Heart right ventricle (tissue), 16 donors: ENCODE measurements at regions of chr9 and their contacts with region 1.

Region 1: GRCh38 chr9:33287087-33287490 is 3.2 kb upstream of the NFX1 start:
- DNase-seq: peak in 1 of 2 donors; percentile 34
- ATAC-seq: no peak
- H3K4me3 ChIP-seq: no peak overlapping the region
- H3K27ac ChIP-seq: peak overlapping the region in 7 of 10 donors; percentile 3 to 35 (median 24)
- H3K4me1 ChIP-seq: peaks cover 0 to 31% (median 26%) of the 10 kb centered on the region in 9 donors
- H3K27me3 ChIP-seq: no peaks in the 10 kb centered on the region
- CTCF ChIP-seq: peak; percentile 31 to 76 (median 67)

Region 2: GRCh38 chr9:33233681-33234473 is 53.2 kb before region 1 on chr9:
- intact Hi-C with region 1: no loop called
- DNase-seq: no peak
- ATAC-seq: no peak
- H3K4me3 ChIP-seq: no peak overlapping the region
- H3K27ac ChIP-seq: no peak overlapping the region
- H3K4me1 ChIP-seq: no peaks in the 10 kb centered on the region
- H3K27me3 ChIP-seq: no peaks in the 10 kb centered on the region
- CTCF ChIP-seq: no peak

Region 3: DNA sequence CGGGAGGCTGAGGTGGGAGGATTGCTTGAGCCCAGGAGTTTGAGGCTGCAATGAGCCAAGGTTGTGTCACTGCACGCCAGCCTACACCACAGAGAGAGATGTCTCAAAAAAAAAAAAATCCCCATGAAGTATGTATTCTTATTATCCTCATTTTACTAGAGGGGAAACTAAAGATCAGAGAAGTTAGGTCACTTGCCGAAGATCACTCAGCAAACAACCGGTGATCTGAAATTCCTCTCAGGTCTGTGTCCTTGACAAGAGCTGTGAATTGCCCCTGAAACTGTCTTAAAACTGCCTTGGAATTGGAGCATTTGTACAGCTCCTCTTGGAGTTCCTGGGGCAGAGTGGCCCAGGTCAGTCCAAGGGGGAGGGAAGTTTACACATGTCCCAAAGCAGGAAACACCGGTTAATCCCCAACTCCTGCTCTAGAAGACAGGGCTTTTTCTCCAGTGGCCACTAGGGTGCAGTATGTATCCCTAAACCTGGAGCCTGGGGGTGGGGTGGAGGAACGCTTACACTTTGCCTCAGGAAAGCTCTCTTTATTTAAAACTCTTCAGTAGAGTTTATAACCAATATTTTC is 87.6 kb after region 1 on chr9:
- intact Hi-C with region 1: no loop called
- DNase-seq: peak in 1 of 2 donors; percentile 87
- ATAC-seq: peak; percentile 63 to 92 (median 82)
- H3K4me3 ChIP-seq: peak overlapping the region in 6 of 10 donors; percentile 6 to 30 (median 22)
- H3K27ac ChIP-seq: peak overlapping the region in 6 of 10 donors; percentile 2 to 79 (median 54)
- H3K4me1 ChIP-seq: peaks cover 5 to 29% (median 18%) of the 10 kb centered on the region in 9 donors
- H3K27me3 ChIP-seq: no peaks in the 10 kb centered on the region
- CTCF ChIP-seq: peak; percentile 72 to 94 (median 88)

Region 4: DNA sequence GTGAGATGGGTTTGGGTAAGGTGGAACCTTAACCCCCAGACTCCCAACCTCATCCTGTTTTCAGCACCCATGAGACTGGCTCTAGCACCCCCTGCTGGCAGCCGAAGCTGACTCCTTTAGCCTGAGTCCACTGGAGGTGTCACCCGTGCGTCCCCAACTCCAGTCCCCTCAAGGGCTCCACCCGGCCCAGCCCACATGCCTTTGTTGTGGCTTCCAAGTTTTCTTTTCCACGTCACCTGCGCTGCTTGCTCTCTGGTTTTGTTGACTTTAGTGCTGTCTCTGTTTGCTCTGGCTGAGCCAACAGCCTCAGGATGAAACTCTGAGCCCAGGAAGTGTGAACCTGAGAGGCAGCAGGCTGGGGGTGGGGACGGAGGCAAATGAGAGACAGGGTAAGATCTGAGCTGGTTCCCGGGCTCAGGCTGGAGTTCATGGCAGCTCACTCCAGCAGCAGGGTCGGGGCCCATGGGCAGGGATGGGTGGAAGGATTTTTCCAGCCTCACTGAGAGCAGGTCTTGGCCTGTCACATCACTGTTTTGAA is 128.5 kb after region 1 on chr9:
- intact Hi-C with region 1: loop called in 1 of 10 experiments (anchors 5 kb)
- DNase-seq: peak; percentile 71 to 81
- ATAC-seq: peak; percentile 77 to 89 (median 84)
- H3K4me3 ChIP-seq: no peak overlapping the region
- H3K27ac ChIP-seq: no peak overlapping the region
- H3K4me1 ChIP-seq: peaks cover 4 to 14% (median 8%) of the 10 kb centered on the region in 9 donors
- H3K27me3 ChIP-seq: no peaks in the 10 kb centered on the region
- CTCF ChIP-seq: peak; percentile 42 to 86 (median 79)

Region 5: DNA sequence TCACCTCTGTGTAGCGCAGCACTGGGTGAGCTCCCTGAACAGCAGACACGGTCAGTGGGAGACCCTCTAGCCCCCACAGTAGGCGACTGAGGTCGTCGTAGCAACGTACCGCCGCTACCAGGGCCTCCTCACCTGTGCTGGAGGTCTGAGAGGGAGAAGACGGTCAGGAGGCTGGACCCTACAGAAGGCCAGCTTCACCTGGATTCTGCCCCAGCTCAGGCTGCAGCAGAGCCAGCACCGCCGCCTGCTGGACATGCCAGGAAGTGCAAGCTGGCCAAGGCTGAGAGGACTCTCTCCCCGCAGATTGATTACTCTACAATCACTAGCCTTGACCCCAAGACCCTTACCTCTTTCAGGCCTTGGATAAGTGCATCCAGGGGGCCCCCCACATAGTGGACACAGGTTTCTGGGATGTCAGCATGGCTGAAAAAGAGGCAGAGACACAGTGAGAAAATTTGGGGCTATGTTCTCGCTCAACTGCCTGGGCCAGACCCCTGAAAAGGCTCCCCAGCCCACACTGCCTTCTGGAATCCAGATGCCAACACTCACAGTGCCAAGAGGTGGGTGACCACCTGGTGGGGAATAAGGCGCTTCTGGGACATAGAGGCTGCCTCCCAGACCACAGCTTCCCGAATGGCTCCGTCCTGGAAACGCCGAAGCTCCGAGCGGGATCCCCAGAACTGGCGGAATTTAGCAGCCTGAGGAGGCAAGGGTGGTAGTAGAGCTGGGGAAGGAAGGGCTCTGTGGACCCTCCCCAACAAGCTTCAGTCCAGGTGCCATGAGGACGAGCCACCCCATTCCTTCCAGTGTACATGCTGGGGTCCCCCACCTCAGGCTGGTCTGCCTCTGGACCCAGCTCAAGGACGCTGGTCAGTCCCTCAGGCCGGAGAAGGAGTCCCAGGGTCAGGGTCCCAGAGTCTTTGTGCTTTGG is 179.7 kb after region 1 on chr9:
- intact Hi-C with region 1: loop called in 6 of 10 experiments (anchors 5 to 10 kb)
- DNase-seq: peak; percentile 45 to 71
- ATAC-seq: peak; percentile 25 to 81 (median 50)
- H3K4me3 ChIP-seq: no peak overlapping the region
- H3K27ac ChIP-seq: no peak overlapping the region
- H3K4me1 ChIP-seq: peaks cover 0 to 2% (median 0%) of the 10 kb centered on the region in 9 donors
- H3K27me3 ChIP-seq: no peaks in the 10 kb centered on the region
- CTCF ChIP-seq: peak; percentile 85 to 96 (median 93)

Region 6: DNA sequence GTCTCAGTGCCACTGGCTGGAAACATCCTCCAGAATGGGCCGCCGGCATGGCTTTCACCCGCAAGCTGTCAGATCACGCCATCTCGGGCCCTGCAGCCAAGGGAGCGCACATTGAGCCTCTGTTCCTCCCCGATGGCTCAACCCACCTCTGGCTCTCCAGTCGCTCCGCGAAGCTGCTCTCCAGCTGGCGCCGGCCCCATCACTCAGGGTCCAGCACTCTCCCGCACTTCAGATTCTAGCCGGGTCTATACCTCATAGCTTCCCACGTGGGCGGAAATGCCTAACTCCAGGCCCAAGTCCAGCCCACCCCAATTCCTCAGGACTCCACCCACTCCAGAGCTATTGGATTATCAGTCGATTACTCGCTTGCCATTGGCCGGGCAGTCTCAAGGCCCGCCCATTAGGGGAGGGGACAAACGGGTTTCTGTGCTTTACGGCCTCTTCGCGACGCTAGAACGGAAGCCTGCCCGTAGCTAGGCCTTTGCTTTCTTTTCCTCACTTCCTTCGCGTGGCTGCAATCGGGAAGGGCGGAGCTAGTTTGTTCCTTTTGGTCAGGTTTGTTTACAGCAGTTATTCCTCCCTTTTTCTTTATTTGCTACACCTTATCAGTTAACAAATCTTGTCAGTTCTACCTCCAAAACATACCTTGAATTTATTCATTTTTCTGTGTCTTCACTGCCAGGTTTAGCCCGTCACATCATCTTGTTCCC is 186.7 kb after region 1 on chr9 and contains the start of gene NOL6:
- intact Hi-C with region 1: loop called in 6 of 10 experiments (anchors 5 to 10 kb)
- DNase-seq: peak; percentile 96 to 99
- ATAC-seq: peak; percentile 99 to 100 (median 100)
- H3K4me3 ChIP-seq: peak within 1 kb of the TSS; percentile 62 to 97 (median 74)
- H3K27ac ChIP-seq: peak within 1 kb of the TSS; percentile 38 to 84 (median 71)
- H3K4me1 ChIP-seq: peaks cover 0 to 26% (median 18%) of the 10 kb centered on the region in 9 donors
- H3K27me3 ChIP-seq: no peaks in the 10 kb centered on the region
- CTCF ChIP-seq: no peak
- total RNA-seq, gene NOL6: 13.0 to 23.2 (median 14.1) TPM